ENCODE measurements at regions of chrX and their contacts with region 1.

Region 1: DNA sequence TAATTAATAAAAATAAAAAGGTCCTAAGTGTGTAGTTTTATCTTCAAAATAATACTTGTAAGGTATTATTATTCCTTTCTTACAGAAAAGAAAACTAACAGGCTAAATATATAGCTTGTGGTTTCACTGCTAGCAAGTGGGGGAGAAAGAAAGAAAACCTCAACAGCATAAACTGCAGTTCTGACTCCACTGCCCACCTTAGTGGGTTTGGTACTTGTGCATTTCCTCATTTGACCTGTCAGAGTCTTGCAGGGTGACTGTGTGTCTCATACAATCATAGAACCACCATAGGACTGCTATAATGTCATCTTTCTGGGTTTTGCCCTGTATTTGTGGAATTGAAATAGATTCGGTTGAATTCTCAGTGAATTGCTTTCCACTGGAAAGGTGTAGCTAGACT is 94.7 kb upstream of the PUDP start:
- DNase-seq: no peak
- H3K4me3 ChIP-seq: no peak overlapping the region
- H3K4me3 Mint-ChIP-seq: no peak overlapping the region
- H3K27ac Mint-ChIP-seq: no peak overlapping the region
- H3K4me1 ChIP-seq: no peaks in the 10 kb centered on the region
- H3K4me1 Mint-ChIP-seq: no peaks in the 10 kb centered on the region
- H3K27me3 ChIP-seq: no peaks in the 10 kb centered on the region
- H3K27me3 Mint-ChIP-seq: no peaks in the 10 kb centered on the region
- CTCF ChIP-seq: no peak

Region 2: DNA sequence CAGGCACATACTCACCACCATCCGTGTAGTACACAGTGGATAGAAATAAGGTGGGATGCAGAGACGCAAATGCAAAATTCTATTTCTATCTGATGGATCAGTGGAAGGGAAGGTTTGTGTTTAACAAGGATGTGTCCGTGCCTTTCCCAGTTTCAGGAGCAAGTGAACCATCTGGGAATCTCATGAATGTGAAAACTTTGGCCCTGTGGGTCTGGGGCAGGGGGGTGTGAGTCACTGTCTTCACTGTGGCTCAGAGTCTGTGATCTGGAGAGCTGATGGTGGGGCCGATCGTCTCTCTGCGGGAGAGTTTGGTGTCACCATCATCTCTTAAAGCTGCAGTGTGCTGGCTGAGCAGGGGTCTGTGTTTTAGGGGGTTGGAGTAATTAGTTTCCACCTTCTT is 274.4 kb before region 1 on chrX:
- CTCF ChIA-PET with region 1: no interaction called
- POLR2A ChIA-PET with region 1: no interaction called
- intact Hi-C with region 1: no loop called
- DNase-seq: peak in 1 of 2 experiments; percentile 40
- H3K4me3 ChIP-seq: no peak overlapping the region
- H3K4me3 Mint-ChIP-seq: no peak overlapping the region
- H3K27ac Mint-ChIP-seq: no peak overlapping the region
- H3K4me1 ChIP-seq: peaks cover 9% of the 10 kb centered on the region; the same call in 1 of the 2 replicates
- H3K4me1 Mint-ChIP-seq: no peaks in the 10 kb centered on the region
- H3K27me3 ChIP-seq: no peaks in the 10 kb centered on the region
- H3K27me3 Mint-ChIP-seq: no peaks in the 10 kb centered on the region
- CTCF ChIP-seq: no peak

Region 3: GRCh38 chrX:7119950-7120877 is 122.4 kb before region 1 on chrX:
- CTCF ChIA-PET with region 1: no interaction called
- POLR2A ChIA-PET with region 1: no interaction called
- intact Hi-C with region 1: no loop called
- DNase-seq: no peak
- H3K4me3 ChIP-seq: no peak overlapping the region
- H3K4me3 Mint-ChIP-seq: peak overlapping the region; percentile 55
- H3K27ac Mint-ChIP-seq: peak overlapping the region; percentile 77
- H3K4me1 ChIP-seq: peaks cover 34% of the 10 kb centered on the region
- H3K4me1 Mint-ChIP-seq: peaks cover 12% of the 10 kb centered on the region
- H3K27me3 ChIP-seq: no peaks in the 10 kb centered on the region
- H3K27me3 Mint-ChIP-seq: no peaks in the 10 kb centered on the region
- CTCF ChIP-seq: no peak

Region 4: GRCh38 chrX:7159132-7159861 is 83.3 kb before region 1 on chrX:
- CTCF ChIA-PET with region 1: no interaction called
- POLR2A ChIA-PET with region 1: no interaction called
- intact Hi-C with region 1: no loop called
- DNase-seq: no peak
- H3K4me3 ChIP-seq: no peak overlapping the region
- H3K4me3 Mint-ChIP-seq: no peak overlapping the region
- H3K27ac Mint-ChIP-seq: no peak overlapping the region
- H3K4me1 ChIP-seq: no peaks in the 10 kb centered on the region
- H3K4me1 Mint-ChIP-seq: peaks cover 6% of the 10 kb centered on the region
- H3K27me3 ChIP-seq: no peaks in the 10 kb centered on the region
- H3K27me3 Mint-ChIP-seq: no peaks in the 10 kb centered on the region
- CTCF ChIP-seq: no peak

Region 5: GRCh38 chrX:7225338-7225737 is 17.3 kb before region 1 on chrX:
- CTCF ChIA-PET with region 1: interaction called, 10 read pairs
- POLR2A ChIA-PET with region 1: no interaction called
- intact Hi-C with region 1: no loop called
- DNase-seq: no peak
- H3K4me3 ChIP-seq: no peak overlapping the region
- H3K4me3 Mint-ChIP-seq: no peak overlapping the region
- H3K27ac Mint-ChIP-seq: no peak overlapping the region
- H3K4me1 ChIP-seq: 0 out of 2 replicates have a peak, but pooled peaks cover 4% of the 10 kb centered on the region
- H3K4me1 Mint-ChIP-seq: peaks cover 8% of the 10 kb centered on the region
- H3K27me3 ChIP-seq: no peaks in the 10 kb centered on the region
- H3K27me3 Mint-ChIP-seq: no peaks in the 10 kb centered on the region
- CTCF ChIP-seq: no peak

Measured in Caco-2 (cell line).